ENCODE measurements at regions of chr12 and their contacts with region 1.

Region 1: DNA sequence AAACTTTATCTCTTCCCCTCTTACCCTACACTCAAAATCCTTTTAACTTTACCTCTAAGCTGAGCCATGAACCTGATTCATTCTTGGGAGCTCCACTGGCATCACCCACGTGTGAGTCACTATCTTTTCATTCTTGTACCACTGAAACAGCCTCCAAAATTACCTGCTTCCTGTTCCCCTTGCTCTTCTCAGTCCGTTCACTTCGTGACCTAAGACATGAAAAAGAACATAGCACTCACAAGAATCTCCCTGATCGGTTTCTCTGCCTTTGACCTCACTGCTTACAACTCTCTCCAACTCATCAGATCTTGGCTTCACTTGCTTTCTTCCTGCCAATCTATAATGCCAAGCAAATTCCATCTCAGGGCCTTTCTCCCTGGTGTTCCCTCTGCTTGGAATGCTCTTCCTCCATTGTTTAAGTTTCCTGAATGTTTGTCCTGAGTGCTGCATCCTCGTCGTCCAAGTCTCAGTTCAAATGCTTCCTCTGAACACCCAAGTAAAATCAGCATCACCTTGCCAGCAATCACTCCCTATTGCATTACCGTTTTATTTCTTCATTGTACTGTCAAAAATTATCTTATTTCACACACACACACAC is 9.2 kb downstream of the GLIPR1 start:
- DNase-seq: no peak
- ATAC-seq: peak; percentile 79
- H3K4me3 Mint-ChIP-seq: no peak overlapping the region
- H3K27ac Mint-ChIP-seq: peak overlapping the region; percentile 80
- H3K4me1 Mint-ChIP-seq: peaks cover 57% of the 10 kb centered on the region
- H3K27me3 Mint-ChIP-seq: no peaks in the 10 kb centered on the region
- CTCF ChIP-seq: no peak

Region 2: GRCh38 chr12:75366629-75367028 is 123.1 kb before region 1 on chr12:
- CTCF ChIA-PET with region 1: no interaction called
- POLR2A ChIA-PET with region 1: no interaction called
- intact Hi-C with region 1: no loop called
- DNase-seq: no peak
- ATAC-seq: no peak
- H3K4me3 Mint-ChIP-seq: no peak overlapping the region
- H3K27ac Mint-ChIP-seq: no peak overlapping the region
- H3K4me1 Mint-ChIP-seq: peaks cover 1% of the 10 kb centered on the region
- H3K27me3 Mint-ChIP-seq: no peaks in the 10 kb centered on the region
- CTCF ChIP-seq: no peak

Region 3: DNA sequence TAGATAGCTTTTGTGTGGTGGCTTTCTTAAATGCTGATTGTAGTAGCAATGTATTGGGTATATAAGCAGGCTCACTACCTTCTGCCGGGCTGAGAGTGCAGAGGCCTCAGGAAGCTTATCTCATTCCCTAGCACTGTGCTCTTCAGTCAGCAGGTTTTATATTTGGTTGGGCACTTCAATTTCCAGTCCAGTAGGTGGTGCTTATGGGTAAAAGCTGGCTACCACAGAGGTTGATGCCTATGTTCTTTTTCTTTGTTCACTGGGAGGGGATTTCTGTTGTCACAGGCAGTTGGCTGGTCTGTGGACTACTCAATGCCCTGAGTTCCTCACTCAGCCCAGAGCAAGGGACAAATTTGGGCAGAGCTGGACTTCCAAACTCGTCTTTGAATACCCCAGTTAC is 52.1 kb before region 1 on chr12:
- CTCF ChIA-PET with region 1: interaction called, 40 read pairs
- POLR2A ChIA-PET with region 1: no interaction called
- intact Hi-C with region 1: loop called (anchors 1 kb)
- DNase-seq: no peak
- ATAC-seq: peak; percentile 72
- H3K4me3 Mint-ChIP-seq: no peak overlapping the region
- H3K27ac Mint-ChIP-seq: no peak overlapping the region
- H3K4me1 Mint-ChIP-seq: peaks cover 3% of the 10 kb centered on the region
- H3K27me3 Mint-ChIP-seq: peaks cover 10% of the 10 kb centered on the region
- CTCF ChIP-seq: no peak

Region 4: DNA sequence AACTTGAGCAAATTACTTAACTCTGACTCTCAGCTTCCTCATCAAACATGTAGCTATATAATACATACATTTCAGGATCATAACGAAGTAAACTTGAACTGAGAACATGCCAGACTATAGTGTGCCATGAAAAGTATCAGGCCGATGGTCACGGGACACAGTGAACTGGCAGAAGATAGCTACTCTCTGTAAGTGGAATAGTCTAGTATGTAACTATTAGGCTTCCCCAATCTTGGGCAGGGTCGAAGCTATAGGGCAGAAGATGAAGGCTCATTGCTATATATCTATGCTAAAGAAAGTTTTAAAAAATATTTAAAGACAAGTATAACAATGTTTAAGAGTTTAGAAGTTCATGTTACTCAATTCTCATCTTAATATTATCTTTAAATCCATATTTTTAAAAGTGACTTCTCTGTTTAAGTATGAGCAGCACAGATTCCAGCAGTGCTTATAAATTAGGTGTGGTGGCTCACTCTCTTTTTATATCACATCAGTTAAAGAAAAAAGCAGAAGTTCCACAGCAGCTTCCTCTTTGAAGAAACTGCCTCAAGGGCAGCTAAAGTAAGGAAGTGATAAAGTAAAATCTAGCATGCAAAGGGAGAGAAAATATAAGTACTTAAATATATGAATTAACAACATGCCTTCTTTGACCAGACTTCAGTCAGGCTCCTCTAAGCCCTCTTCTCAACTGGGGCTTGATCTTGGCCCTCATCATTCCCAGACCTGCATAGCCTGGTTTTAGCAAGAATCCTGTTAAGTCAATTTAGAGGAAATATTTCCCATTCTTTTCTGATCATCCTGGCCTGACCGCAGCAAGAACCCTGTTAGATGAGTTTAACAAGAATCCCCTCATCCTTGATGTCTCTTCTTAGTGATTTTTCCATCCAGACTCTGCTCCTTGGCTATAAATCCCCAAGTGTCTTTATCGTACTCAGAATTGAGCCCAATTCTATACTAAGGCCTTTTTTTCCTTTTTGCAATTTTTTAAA is 17.5 kb before region 1 on chr12:
- CTCF ChIA-PET with region 1: interaction called, 27 read pairs
- POLR2A ChIA-PET with region 1: interaction called, 68 read pairs
- intact Hi-C with region 1: loop called (anchors 2 kb)
- DNase-seq: no peak
- ATAC-seq: peak; percentile 86
- H3K4me3 Mint-ChIP-seq: peak overlapping the region; percentile 66
- H3K27ac Mint-ChIP-seq: peak overlapping the region; percentile 98
- H3K4me1 Mint-ChIP-seq: peaks cover 43% of the 10 kb centered on the region
- H3K27me3 Mint-ChIP-seq: peaks cover 2% of the 10 kb centered on the region
- CTCF ChIP-seq: no peak